ENCODE measurements at regions of chr10 and their contacts with region 1.

Region 1: DNA sequence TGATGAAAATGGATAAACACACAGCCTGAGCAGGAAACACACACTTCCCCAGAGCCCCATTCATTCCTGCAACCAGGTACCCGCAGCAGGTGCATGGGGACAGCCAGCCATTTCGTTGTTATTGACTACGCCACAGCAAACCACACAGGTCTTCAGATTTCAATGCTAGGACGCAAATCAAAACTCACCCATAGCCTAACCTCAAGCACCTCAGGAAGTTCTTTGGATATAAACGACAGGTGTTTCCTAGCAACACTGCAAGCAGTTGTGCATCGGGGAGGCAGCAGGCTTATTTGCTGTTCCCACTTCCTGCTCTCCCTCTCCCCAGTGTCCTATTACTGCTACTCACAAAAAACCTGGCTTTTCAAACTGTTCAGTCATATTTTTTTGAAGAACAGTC is 176.5 kb upstream of the FRMD4A start:
- DNase-seq: peak; percentile 58
- ATAC-seq: peak; percentile 50
- H3K4me3 Mint-ChIP-seq: peak overlapping the region; percentile 30
- H3K27ac Mint-ChIP-seq: peak overlapping the region; percentile 72
- H3K4me1 Mint-ChIP-seq: peaks cover 43% of the 10 kb centered on the region
- H3K27me3 Mint-ChIP-seq: no peaks in the 10 kb centered on the region

Region 2: DNA sequence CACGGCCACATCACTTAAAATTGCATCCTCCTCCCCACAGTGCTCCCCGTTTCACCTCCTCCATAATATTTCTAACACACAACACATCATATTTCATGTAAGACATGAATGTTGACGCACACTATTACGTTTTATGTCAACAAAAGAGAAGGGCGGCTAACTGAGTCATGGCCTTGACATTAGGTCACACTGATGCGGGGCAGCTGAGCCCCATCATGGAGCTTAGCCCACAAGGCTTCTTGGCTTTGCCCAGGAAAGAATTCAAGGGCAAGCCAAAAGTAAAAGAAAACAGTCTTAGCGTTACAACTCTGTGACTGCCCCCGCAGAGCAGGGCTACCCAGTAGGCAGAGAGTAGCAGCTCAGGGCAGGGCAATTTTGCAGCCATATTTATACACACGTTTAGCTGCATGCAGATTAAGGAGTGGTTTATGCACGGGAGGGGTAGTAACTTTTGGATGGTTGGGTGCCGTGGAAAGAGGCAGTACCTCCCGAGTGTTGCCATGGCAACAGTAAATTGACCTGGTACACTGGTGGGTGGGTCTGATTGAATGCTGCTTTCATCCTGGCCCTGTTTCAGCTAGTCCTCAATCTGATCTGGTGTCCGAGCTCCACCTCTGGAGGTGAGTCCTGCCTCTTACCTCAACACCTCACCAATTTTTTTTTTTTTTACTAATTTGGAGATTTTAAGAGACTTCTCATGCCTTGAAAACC is 20.2 kb before region 1 on chr10:
- CTCF ChIA-PET with region 1: no interaction called
- POLR2A ChIA-PET with region 1: no interaction called
- intact Hi-C with region 1: no loop called
- DNase-seq: no peak
- ATAC-seq: no peak
- H3K4me3 Mint-ChIP-seq: no peak overlapping the region
- H3K27ac Mint-ChIP-seq: no peak overlapping the region
- H3K4me1 Mint-ChIP-seq: peaks cover 2% of the 10 kb centered on the region
- H3K27me3 Mint-ChIP-seq: peaks cover 19% of the 10 kb centered on the region

Region 3: DNA sequence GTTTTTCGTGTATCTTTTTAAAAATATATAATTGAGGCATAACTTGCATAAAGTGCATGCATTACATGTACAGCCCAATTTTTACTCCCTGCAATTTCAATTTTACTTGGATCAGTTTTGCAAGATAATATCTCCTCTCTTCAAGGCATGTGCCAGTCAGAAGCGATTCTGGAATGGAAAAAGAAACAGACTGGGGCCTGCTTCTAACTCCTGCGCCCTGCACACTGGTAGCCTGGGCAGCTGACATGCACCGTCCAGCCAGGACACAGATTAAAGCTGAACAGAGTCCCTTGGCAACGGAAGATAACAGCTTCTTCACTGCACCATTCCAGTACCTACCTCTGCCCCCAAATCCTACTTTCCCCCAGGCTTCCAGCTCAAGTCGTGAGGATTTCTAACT is 85.4 kb after region 1 on chr10:
- CTCF ChIA-PET with region 1: no interaction called
- POLR2A ChIA-PET with region 1: no interaction called
- intact Hi-C with region 1: no loop called
- DNase-seq: no peak
- ATAC-seq: no peak
- H3K4me3 Mint-ChIP-seq: no peak overlapping the region
- H3K27ac Mint-ChIP-seq: no peak overlapping the region
- H3K4me1 Mint-ChIP-seq: peaks cover 78% of the 10 kb centered on the region
- H3K27me3 Mint-ChIP-seq: no peaks in the 10 kb centered on the region

Region 4: GRCh38 chr10:14659626-14660196 is 152.5 kb after region 1 on chr10:
- CTCF ChIA-PET with region 1: no interaction called
- POLR2A ChIA-PET with region 1: interaction called, 3 read pairs
- intact Hi-C with region 1: loop called in 1 of 2 experiments (anchors 5 kb)
- DNase-seq: peak; percentile 71
- ATAC-seq: peak; percentile 80
- H3K4me3 Mint-ChIP-seq: peak overlapping the region; percentile 60
- H3K27ac Mint-ChIP-seq: peak overlapping the region; percentile 92
- H3K4me1 Mint-ChIP-seq: peaks cover 82% of the 10 kb centered on the region
- H3K27me3 Mint-ChIP-seq: no peaks in the 10 kb centered on the region

Region 5: DNA sequence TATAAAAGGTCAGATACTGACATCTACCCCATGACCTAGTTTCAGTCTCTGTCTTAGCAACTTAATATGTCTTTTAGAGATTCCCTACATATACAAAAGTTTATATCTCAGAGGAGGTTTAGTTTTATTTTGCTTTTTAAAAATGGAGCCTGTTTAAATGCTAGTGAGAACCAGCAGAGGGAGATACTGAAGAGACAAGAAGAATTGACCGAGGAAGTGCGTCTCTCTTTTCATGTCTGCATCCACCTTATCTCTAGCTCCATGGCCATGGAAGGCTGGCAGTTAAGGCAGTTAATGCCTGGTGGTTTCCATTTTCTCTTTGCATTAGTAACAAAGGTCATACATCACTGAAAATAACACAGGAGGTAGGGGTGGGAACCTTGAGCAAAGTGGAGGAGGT is 382.1 kb after region 1 on chr10:
- CTCF ChIA-PET with region 1: no interaction called
- POLR2A ChIA-PET with region 1: no interaction called
- intact Hi-C with region 1: no loop called
- DNase-seq: no peak
- ATAC-seq: peak; percentile 36
- H3K4me3 Mint-ChIP-seq: no peak overlapping the region
- H3K27ac Mint-ChIP-seq: no peak overlapping the region
- H3K4me1 Mint-ChIP-seq: peaks cover 7% of the 10 kb centered on the region
- H3K27me3 Mint-ChIP-seq: no peaks in the 10 kb centered on the region

Region 6: DNA sequence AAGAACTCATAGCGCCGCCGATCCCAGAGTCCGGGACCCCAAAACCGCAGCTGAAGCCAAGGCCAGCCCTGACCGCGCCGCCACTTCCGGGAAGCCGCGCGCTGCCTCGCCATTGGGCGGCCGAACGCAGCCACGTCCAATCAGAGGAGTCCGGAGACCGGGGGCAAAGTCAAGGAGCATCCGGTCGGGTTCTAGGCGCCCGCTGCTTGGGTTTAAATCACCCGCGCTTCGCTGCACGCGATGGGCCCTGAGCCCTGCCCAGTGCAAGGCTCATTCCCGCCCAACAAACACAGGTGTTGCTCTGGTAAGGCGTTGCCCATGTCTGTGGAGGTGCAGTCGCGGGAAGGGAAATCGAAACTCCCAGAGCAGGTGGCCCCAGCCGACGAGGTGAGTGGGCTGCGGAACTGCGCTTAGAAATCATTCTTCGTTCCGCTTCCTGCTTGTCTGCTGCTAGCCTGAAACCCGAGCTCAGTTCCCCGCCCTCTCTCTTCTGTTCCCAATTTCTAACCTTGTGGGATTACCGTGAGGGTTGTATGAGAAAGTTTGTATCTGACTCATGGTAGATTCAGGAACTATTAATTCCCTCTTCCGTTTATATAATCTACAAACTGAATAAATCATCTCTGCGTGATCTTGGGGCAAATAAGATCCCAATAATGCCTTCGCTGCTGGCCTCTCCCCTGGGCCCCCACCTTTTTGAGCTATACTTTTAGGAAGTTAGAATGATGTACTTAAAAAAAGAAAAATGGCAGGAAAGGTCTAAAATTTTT is 447.0 kb after region 1 on chr10 and contains the start of gene DCLRE1C:
- CTCF ChIA-PET with region 1: interaction called, 3 read pairs
- POLR2A ChIA-PET with region 1: no interaction called
- intact Hi-C with region 1: loop called in 1 of 2 experiments (anchors 5 kb)
- DNase-seq: peak; percentile 94
- ATAC-seq: peak; percentile 94
- H3K4me3 Mint-ChIP-seq: peak within 1 kb of the TSS; percentile 90
- H3K27ac Mint-ChIP-seq: peak within 1 kb of the TSS; percentile 97
- H3K4me1 Mint-ChIP-seq: peaks cover 52% of the 10 kb centered on the region
- H3K27me3 Mint-ChIP-seq: no peaks in the 10 kb centered on the region
- total RNA-seq, gene DCLRE1C: 17.9 to 30.9 TPM